ENCODE measurements at regions of chr4 and their contacts with region 1.

Region 1: GRCh38 chr4:54217642-54218495 is 11.2 kb upstream of the PDGFRA start:
- DNase-seq: peak; percentile 85 to 86
- H3K4me3 ChIP-seq: peak overlapping the region; percentile 21 to 37
- H3K27ac ChIP-seq: peak overlapping the region in 1 of 2 donors; percentile 3
- H3K4me1 ChIP-seq: no peaks in the 10 kb centered on the region
- H3K27me3 ChIP-seq: no peaks in the 10 kb centered on the region
- CTCF ChIP-seq: peak; percentile 89 to 94 (median 92)
- POLR2A ChIP-seq: no peak

Region 2: DNA sequence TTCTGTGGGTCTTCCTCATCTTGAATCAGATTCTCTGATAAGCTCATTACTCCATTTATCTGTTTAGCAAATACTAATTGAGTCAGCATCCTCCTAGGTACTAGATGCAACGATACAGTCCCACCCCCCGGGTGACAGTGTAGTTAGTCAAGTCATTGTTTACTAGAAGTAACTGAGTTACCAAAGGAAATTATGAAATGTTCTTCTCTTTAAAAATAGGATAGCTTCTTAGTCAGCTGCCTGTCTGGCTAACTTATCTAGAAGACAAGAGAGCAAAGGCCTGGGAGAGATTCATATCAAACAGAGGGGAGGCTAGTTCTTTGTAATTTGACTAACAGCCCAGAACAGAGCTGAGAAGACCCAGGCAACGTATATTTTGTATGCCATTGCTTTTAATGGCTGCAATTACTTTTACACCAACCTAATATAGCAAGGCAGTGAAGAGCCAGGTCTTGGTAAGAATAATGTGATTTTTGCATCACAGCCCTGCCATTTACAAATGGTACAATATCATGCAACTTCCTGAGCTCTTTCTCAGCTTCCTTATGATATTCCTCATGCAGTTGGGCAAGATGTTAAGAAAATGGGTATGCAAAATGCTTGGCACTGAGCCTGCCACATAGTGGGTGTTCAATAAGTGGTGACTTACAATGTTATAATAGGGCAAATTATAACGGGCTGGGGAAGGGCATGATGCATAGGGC is 303.4 kb before region 1 on chr4:
- intact Hi-C with region 1: loop called (anchors 10 kb)
- DNase-seq: no peak
- H3K4me3 ChIP-seq: no peak overlapping the region
- H3K27ac ChIP-seq: no peak overlapping the region
- H3K4me1 ChIP-seq: no peaks in the 10 kb centered on the region
- H3K27me3 ChIP-seq: no peaks in the 10 kb centered on the region
- CTCF ChIP-seq: no peak
- POLR2A ChIP-seq: no peak

Measured in uterus (tissue), 4 donors.